ENCODE measurements at regions of chr5 and their contacts with region 1.

Region 1: DNA sequence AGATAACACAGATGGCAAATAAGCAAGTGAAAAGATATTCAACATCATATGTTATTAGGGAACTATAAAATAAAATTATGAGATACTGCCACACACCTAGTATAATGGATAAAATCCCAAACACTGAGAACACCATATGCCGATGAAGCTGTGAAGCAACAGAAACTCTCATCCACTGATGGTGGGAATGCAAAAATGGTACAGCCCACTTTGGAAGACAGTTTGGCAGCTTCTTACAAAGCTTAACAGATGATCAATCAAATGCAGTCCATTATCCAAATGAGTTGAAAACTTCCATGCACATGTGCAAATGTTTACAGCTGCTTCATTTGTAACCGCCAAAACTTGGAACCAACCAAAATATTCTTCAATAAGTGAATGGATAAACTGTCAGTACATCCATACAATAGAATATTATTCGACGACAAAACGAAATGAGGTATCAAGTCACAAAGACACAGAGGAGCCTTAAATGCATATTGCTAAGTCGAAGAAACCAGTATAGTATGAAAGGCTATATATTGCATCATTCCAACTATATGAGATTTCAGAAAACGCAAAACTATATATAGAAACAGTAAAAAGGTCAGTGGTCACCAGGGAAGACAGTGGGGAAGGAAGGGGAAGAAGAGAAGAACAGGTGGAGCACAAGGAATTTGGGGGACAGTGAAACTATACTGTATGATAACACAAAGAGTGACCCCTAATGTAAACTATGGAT is 14.9 kb downstream of the PFDN1 start:
- DNase-seq: no peak
- H3K4me3 ChIP-seq: no peak overlapping the region
- H3K27ac ChIP-seq: no peak overlapping the region
- H3K4me1 ChIP-seq: peaks cover 28 to 41% (median 34%) of the 10 kb centered on the region in 4 donors
- H3K27me3 ChIP-seq: no peaks in the 10 kb centered on the region
- CTCF ChIP-seq: no peak
- EP300 ChIP-seq: no peak
- POLR2A ChIP-seq: no peak

Region 2: GRCh38 chr5:140259500-140259899 is 28.5 kb before region 1 on chr5:
- intact Hi-C with region 1: loop called (anchors 1 kb)
- DNase-seq: peak; percentile 14
- H3K4me3 ChIP-seq: no peak overlapping the region
- H3K27ac ChIP-seq: no peak overlapping the region
- H3K4me1 ChIP-seq: peaks cover 15 to 28% (median 21%) of the 10 kb centered on the region in 4 donors
- H3K27me3 ChIP-seq: no peaks in the 10 kb centered on the region
- CTCF ChIP-seq: no peak
- EP300 ChIP-seq: no peak
- POLR2A ChIP-seq: no peak